ENCODE measurements at regions of chr10 and their contacts with region 1.

Region 1: GRCh38 chr10:62011558-62011957 is 110.1 kb downstream of the ARID5B start:
- DNase-seq: no peak
- H3K4me3 ChIP-seq: no peak overlapping the region
- H3K27ac ChIP-seq: no peak overlapping the region
- H3K4me1 ChIP-seq: peaks cover 36% of the 10 kb centered on the region
- CTCF ChIP-seq: no peak

Region 2: GRCh38 chr10:62000037-62000603 is 11.4 kb before region 1 on chr10:
- CTCF ChIA-PET with region 1: no interaction called
- POLR2A ChIA-PET with region 1: interaction called, 10 read pairs
- intact Hi-C with region 1: no loop called
- DNase-seq: peak; percentile 85
- H3K4me3 ChIP-seq: peak overlapping the region; percentile 65
- H3K27ac ChIP-seq: peak overlapping the region; percentile 83
- H3K4me1 ChIP-seq: peaks cover 98% of the 10 kb centered on the region
- CTCF ChIP-seq: no peak

Region 3: GRCh38 chr10:63030541-63030940 is 1019.0 kb after region 1 on chr10:
- CTCF ChIA-PET with region 1: no interaction called
- POLR2A ChIA-PET with region 1: no interaction called
- intact Hi-C with region 1: no loop called
- DNase-seq: no peak
- H3K4me3 ChIP-seq: no peak overlapping the region
- H3K27ac ChIP-seq: no peak overlapping the region
- H3K4me1 ChIP-seq: no peaks in the 10 kb centered on the region
- CTCF ChIP-seq: no peak